PC-3 (cell line): ENCODE measurements at regions of chr1 and their contacts with region 1.

Region 1: GRCh38 chr1:217721692-217722091 is 90.5 kb downstream of the SPATA17 start:
- DNase-seq: peak; percentile 50
- ATAC-seq: peak; percentile 66
- H3K4me3 ChIP-seq: no peak overlapping the region
- H3K27ac ChIP-seq: no peak overlapping the region
- H3K4me1 ChIP-seq: peaks cover 11% of the 10 kb centered on the region
- H3K27me3 ChIP-seq: no peaks in the 10 kb centered on the region
- CTCF ChIP-seq: no peak

Region 2: GRCh38 chr1:217579582-217579981 is 142.1 kb before region 1 on chr1:
- CTCF ChIA-PET with region 1: no interaction called
- POLR2A ChIA-PET with region 1: no interaction called
- intact Hi-C with region 1: loop called (anchors 5 kb)
- DNase-seq: peak; percentile 25
- ATAC-seq: peak; percentile 61
- H3K4me3 ChIP-seq: no peak overlapping the region
- H3K27ac ChIP-seq: no peak overlapping the region
- H3K4me1 ChIP-seq: peaks cover 7% of the 10 kb centered on the region
- H3K27me3 ChIP-seq: no peaks in the 10 kb centered on the region
- CTCF ChIP-seq: peak; percentile 50

Region 3: DNA sequence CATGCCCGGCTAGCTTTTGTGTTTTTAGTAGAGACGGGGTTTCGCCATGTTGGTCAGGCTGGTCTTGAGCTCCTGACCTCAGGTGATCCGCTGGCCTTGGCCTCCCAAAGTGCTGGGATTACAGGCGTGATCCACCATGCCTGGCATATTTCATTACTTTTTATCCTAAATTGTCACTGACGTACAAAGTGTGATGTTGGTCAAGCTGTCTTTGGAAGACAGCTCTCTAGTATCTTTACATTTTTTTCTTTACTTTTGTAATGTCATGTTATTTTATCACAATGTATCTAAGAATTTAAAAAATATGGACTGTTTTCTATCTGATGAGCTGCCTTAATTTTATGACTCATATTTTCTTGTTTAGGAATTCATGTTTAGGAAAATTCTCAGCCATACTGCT is 18.4 kb before region 1 on chr1:
- CTCF ChIA-PET with region 1: no interaction called
- POLR2A ChIA-PET with region 1: interaction called, 14 read pairs
- intact Hi-C with region 1: no loop called
- DNase-seq: no peak
- ATAC-seq: no peak
- H3K4me3 ChIP-seq: no peak overlapping the region
- H3K27ac ChIP-seq: no peak overlapping the region
- H3K4me1 ChIP-seq: no peaks in the 10 kb centered on the region
- H3K27me3 ChIP-seq: no peaks in the 10 kb centered on the region
- CTCF ChIP-seq: no peak